ENCODE measurements at regions of chr7 and their contacts with region 1.

Region 1: DNA sequence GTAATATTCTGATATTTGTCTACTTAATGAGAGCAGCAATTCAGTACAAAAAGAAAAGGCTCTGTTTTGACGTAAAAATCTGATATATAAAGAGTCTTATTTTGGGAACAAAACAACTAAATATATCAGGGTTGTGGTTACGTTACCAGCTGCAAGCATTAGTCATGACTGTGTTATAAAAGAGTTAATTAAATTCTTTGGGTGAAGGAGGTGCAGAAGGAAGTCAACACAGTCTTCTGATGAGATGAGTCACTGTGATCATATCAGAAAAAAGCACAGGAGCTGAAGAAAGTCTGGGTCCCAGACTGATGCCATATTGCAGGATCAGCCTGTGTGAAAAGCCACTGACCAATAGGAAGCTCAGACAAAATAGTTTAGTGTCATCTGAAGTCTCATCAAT is 234.3 kb upstream of the TEX47 start:
- DNase-seq: no peak
- ATAC-seq: peak; percentile 77
- H3K4me3 ChIP-seq: no peak overlapping the region
- H3K27ac ChIP-seq: no peak overlapping the region
- H3K4me1 ChIP-seq: no peaks in the 10 kb centered on the region
- H3K27me3 ChIP-seq: no peaks in the 10 kb centered on the region
- CTCF ChIP-seq: no peak
- EP300 ChIP-seq: peak in 1 of 2 experiments; percentile 19; a peak in 1 of 4 replicates
- POLR2A ChIP-seq: no peak
- RAD21 ChIP-seq: no peak

Region 2: GRCh38 chr7:88919478-88920131 is 110.3 kb before region 1 on chr7:
- CTCF ChIA-PET with region 1: no interaction called
- POLR2A ChIA-PET with region 1: no interaction called
- RAD21 ChIA-PET with region 1: no interaction called
- SMC1A ChIA-PET with region 1: no interaction called
- in situ Hi-C with region 1: no loop called
- intact Hi-C with region 1: no loop called
- DNase-seq: no peak
- ATAC-seq: peak; percentile 45
- H3K4me3 ChIP-seq: no peak overlapping the region
- H3K27ac ChIP-seq: no peak overlapping the region
- H3K4me1 ChIP-seq: no peaks in the 10 kb centered on the region
- H3K27me3 ChIP-seq: no peaks in the 10 kb centered on the region
- CTCF ChIP-seq: no peak
- EP300 ChIP-seq: no peak
- POLR2A ChIP-seq: no peak
- RAD21 ChIP-seq: no peak

Region 3: GRCh38 chr7:89002981-89003956 is 26.6 kb before region 1 on chr7:
- CTCF ChIA-PET with region 1: interaction called, 9 read pairs
- POLR2A ChIA-PET with region 1: interaction called, 3 read pairs
- RAD21 ChIA-PET with region 1: interaction called, 66 read pairs
- SMC1A ChIA-PET with region 1: interaction called, 45 read pairs
- in situ Hi-C with region 1: no loop called
- intact Hi-C with region 1: no loop called
- DNase-seq: peak; percentile 24
- ATAC-seq: peak; percentile 89
- H3K4me3 ChIP-seq: 0 out of 2 replicates have a peak overlapping the region, but pooled peaks have one; percentile 17
- H3K27ac ChIP-seq: peak overlapping the region; percentile 55
- H3K4me1 ChIP-seq: no peaks in the 10 kb centered on the region; the same call in 1 of the 2 replicates
- H3K27me3 ChIP-seq: no peaks in the 10 kb centered on the region
- CTCF ChIP-seq: no peak
- EP300 ChIP-seq: peak in 1 of 2 experiments; percentile 22; a peak in 1 of 4 replicates
- POLR2A ChIP-seq: no peak
- RAD21 ChIP-seq: no peak

Region 4: DNA sequence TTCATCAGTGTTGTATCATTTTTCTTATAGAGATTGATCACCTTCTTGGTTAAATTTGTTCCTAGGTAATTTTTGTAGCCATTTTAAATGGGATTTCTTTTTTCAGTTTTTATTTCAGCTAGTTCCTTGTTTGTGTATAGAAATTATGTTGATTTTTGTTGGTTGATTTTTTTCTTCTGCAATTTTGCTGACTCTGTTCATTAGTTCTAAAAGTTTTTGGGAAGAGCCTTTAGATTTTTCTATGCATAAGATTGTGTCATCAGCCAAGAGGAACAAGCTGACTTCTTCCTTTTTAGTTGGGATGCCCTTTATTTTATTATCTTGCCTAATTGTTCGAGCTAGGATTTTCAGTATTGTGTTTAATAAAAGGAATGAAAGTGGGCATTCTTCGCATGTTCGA is 12.2 kb before region 1 on chr7:
- CTCF ChIA-PET with region 1: interaction called, 3 read pairs
- POLR2A ChIA-PET with region 1: no interaction called
- RAD21 ChIA-PET with region 1: no interaction called
- SMC1A ChIA-PET with region 1: interaction called, 10 read pairs
- in situ Hi-C with region 1: no loop called
- intact Hi-C with region 1: no loop called
- DNase-seq: no peak
- ATAC-seq: no peak
- H3K4me3 ChIP-seq: no peak overlapping the region
- H3K27ac ChIP-seq: no peak overlapping the region
- H3K4me1 ChIP-seq: no peaks in the 10 kb centered on the region
- H3K27me3 ChIP-seq: no peaks in the 10 kb centered on the region
- CTCF ChIP-seq: no peak
- EP300 ChIP-seq: no peak
- POLR2A ChIP-seq: no peak
- RAD21 ChIP-seq: no peak

Region 5: DNA sequence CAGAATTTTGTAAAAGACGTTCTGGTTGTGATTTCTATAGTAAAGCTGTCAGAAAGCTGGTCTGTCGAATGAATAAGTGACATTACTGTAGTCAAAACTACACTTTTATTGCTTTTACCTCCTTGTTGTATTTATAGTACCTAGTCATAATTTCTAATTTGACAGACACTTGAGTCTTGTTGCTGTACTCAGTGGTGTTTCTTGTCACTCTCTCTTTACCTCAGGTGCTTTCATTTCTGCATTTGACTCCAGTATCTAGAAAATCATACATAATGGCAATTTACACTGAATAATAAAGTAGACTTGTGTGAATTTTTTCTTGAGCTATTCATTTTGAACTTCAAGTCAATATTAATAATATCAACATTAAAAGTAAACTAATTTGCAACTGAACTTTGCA is 23.3 kb after region 1 on chr7:
- CTCF ChIA-PET with region 1: interaction called, 3 read pairs
- POLR2A ChIA-PET with region 1: interaction called, 3 read pairs
- RAD21 ChIA-PET with region 1: interaction called, 6 read pairs
- SMC1A ChIA-PET with region 1: interaction called, 12 read pairs
- in situ Hi-C with region 1: no loop called
- intact Hi-C with region 1: no loop called
- DNase-seq: no peak
- ATAC-seq: peak; percentile 80
- H3K4me3 ChIP-seq: no peak overlapping the region
- H3K27ac ChIP-seq: no peak overlapping the region
- H3K4me1 ChIP-seq: no peaks in the 10 kb centered on the region
- H3K27me3 ChIP-seq: no peaks in the 10 kb centered on the region
- CTCF ChIP-seq: no peak
- EP300 ChIP-seq: no peak
- POLR2A ChIP-seq: no peak
- RAD21 ChIP-seq: no peak